ENCODE measurements at regions of chr19 and their contacts with region 1.

Region 1: DNA sequence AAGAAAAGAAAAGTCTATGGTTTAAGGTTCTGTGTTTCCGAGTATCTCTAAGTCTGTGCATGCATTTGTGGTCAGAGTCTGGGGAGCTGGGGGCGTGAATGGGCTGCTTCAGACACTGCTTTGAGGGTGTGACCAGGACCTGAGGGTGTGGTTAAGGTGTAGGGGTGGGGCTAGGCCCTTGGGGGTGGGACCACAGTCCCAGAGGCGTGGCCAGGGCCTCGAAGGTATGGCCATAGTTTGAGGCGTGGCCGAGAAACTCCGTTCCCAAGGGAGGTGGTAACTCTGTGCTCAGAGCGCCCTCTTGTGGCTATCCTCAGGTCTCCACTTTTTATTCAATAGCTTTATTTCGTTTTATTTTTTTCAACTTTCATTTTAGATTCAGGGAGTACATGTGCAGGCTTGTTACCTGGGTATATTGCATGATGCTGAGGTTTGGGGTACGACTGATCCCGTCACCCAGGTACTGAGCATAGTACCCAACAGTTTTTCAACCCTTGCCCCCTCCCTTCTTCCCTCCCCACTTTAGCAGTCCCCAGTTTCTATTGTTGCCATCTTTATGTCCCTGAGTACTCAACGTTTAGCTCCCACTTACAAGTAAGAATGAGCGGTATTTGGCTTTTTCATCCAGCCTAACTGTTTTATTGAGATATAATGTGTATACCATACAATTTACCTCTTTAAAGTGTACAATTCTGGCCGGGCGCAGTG is 7.0 kb upstream of the CBLC start:
- DNase-seq: peak; percentile 99
- ATAC-seq: peak; percentile 96 to 99
- H3K4me3 ChIP-seq: no peak overlapping the region
- H3K27ac ChIP-seq: peak overlapping the region; percentile 74 to 88
- H3K4me1 ChIP-seq: peaks cover 47% of the 10 kb centered on the region
- CTCF ChIP-seq: peak; percentile 99
- EP300 ChIP-seq: no peak; a peak in 1 of 5 replicates
- POLR2A ChIP-seq: no peak
- RAD21 ChIP-seq: peak; percentile 100

Region 2: GRCh38 chr19:44582581-44583265 is 188.0 kb before region 1 on chr19:
- CTCF ChIA-PET with region 1: interaction called, 48 read pairs
- POLR2A ChIA-PET with region 1: no interaction called
- DNase-seq: peak; percentile 58 to 65
- ATAC-seq: peak; percentile 44 to 80; a peak in 3 of 6 replicates
- H3K4me3 ChIP-seq: no peak overlapping the region
- H3K27ac ChIP-seq: peak overlapping the region in 1 of 2 experiments; percentile 7; a peak in 1 of 6 replicates
- H3K4me1 ChIP-seq: peaks cover 23% of the 10 kb centered on the region
- CTCF ChIP-seq: peak; percentile 50
- EP300 ChIP-seq: no peak; a peak in 1 of 5 replicates
- POLR2A ChIP-seq: no peak
- RAD21 ChIP-seq: peak in 1 of 2 experiments; percentile 60; a peak in 3 of 5 replicates

Region 3: DNA sequence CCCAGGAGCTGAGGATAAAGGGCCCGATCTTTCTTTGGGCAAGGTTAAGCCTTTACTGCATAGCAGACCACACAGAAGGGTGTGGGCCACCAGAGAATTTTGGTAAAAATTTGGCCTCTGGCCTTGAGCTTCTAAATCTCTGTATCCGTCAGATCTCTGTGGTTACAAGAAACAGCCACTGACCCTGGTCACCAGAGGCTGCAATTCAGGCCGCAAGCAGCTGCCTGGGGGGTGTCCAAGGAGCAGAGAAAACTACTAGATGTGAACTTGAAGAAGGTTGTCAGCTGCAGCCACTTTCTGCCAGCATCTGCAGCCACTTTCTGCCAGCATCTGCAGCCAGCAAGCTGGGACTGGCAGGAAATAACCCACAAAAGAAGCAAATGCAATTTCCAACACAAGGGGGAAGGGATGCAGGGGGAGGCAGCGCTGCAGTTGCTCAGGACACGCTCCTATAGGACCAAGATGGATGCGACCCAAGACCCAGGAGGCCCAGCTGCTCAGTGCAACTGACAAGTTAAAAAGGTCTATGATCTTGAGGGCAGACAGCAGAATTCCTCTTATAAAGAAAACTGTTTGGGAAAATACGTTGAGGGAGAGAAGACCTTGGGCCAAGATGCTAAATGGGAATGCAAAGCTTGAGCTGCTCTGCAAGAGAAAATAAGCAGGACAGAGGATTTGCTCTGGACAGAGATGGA is 107.9 kb before region 1 on chr19:
- CTCF ChIA-PET with region 1: interaction called, 32 read pairs
- POLR2A ChIA-PET with region 1: no interaction called
- DNase-seq: no peak
- ATAC-seq: no peak
- H3K4me3 ChIP-seq: no peak overlapping the region
- H3K27ac ChIP-seq: peak overlapping the region in 1 of 2 experiments; percentile 40; a peak in 2 of 6 replicates
- H3K4me1 ChIP-seq: peaks cover 18% of the 10 kb centered on the region; the same call in 1 of the 3 replicates
- CTCF ChIP-seq: no peak
- EP300 ChIP-seq: no peak
- POLR2A ChIP-seq: no peak
- RAD21 ChIP-seq: no peak

Region 4: GRCh38 chr19:44741841-44742352 is 28.8 kb before region 1 on chr19:
- CTCF ChIA-PET with region 1: interaction called, 1,899 read pairs
- POLR2A ChIA-PET with region 1: interaction called, 15 read pairs
- DNase-seq: peak; percentile 97 to 100
- ATAC-seq: peak; percentile 62 to 73
- H3K4me3 ChIP-seq: 0 out of 3 replicates have a peak overlapping the region, but pooled peaks have one; percentile 2
- H3K27ac ChIP-seq: peak overlapping the region; percentile 92 to 99
- H3K4me1 ChIP-seq: peaks cover 93% of the 10 kb centered on the region
- CTCF ChIP-seq: no peak
- EP300 ChIP-seq: peak; percentile 97 to 99
- POLR2A ChIP-seq: peak; percentile 39; the same call in 1 of the 2 replicates
- RAD21 ChIP-seq: peak; percentile 37 to 67

Region 5: DNA sequence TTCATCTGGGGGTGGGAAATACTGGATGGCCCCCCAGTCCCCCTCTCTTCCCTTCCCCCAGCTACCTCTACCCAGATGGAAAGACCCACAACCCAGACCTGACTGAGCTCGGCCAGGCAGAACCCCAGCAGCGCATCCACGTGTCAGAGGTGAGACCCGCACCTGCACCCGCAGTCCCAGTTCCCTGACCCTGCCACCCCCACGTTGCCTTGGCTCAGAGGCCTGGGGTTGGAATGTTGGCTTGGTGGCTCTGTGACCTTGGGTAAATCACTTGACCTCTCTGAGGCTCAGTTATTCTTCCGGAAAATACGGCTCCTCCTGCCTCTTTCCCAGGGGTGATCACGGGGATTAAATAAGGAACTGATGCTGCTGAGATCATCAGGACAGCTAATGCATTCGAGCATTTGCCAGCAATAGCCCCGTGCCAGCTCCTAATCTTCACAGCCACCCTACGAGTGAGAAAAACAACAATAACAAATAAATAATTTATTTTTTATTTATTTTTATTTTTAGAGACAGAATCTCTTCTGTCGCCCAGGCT is 19.3 kb after region 1 on chr19:
- CTCF ChIA-PET with region 1: interaction called, 120 read pairs
- POLR2A ChIA-PET with region 1: no interaction called
- DNase-seq: no peak
- ATAC-seq: no peak
- H3K4me3 ChIP-seq: no peak overlapping the region
- H3K27ac ChIP-seq: no peak overlapping the region
- H3K4me1 ChIP-seq: no peaks in the 10 kb centered on the region
- CTCF ChIP-seq: no peak
- EP300 ChIP-seq: no peak
- POLR2A ChIP-seq: no peak
- RAD21 ChIP-seq: no peak

Region 6: DNA sequence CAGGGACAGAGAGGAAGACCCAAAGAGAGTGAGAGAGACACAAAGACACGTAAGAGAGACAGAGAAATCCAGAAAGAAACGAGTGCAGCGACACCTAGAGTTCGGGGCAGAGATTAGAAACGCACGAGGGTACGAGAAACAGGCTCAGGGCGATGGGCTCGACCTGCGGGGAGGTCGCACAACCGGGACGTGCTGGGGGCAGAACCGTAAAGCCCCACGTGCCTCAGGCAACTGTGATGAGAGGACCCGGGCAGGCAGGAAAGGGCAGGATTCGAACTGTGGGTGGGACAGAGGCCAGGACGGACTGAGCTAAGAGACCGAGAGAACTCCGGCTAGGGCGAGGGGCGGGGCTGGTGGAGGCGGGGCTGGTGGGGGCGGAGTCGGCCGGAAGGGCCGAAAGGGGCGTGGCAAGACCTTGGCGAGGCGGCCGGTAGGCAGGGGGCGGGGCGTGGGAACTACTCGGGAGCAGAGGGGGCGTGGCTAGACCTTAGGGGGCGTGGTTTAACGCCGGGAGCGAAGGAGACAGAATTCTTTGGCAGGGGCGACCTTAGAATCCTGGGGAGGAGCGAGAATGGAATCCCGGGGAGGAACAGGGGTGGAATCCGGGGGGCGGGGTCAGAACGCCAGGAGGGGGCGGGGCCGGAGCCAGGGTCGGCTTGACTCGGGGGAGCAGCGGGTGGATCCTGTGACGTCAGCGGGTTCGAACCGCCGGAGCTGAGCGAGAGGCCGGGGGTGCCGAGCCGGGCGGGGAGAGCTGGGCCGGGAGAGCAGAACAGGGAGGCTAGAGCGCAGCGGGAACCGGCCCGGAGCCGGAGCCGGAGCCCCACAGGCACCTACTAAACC is 75.1 kb after region 1 on chr19 and contains the start of gene NECTIN2:
- CTCF ChIA-PET with region 1: interaction called, 18 read pairs
- POLR2A ChIA-PET with region 1: interaction called, 5 read pairs
- DNase-seq: peak; percentile 99 to 100
- ATAC-seq: peak; percentile 67 to 73
- H3K4me3 ChIP-seq: peak within 1 kb of the TSS; percentile 97
- H3K27ac ChIP-seq: peak within 1 kb of the TSS; percentile 94 to 95
- H3K4me1 ChIP-seq: peaks cover 37% of the 10 kb centered on the region
- CTCF ChIP-seq: peak; percentile 96
- EP300 ChIP-seq: no peak
- POLR2A ChIP-seq: peak; percentile 63
- RAD21 ChIP-seq: peak; percentile 73 to 75
- polyA plus RNA-seq, gene NECTIN2: 69.4 and 84.8 TPM in 2 replicates